ENCODE measurements at regions of chr6 and their contacts with region 1.

Region 1: GRCh38 chr6:46129629-46130511 is at the start of gene ENPP4:
- DNase-seq: peak; percentile 83 to 90
- H3K4me3 ChIP-seq: peak within 1 kb of the TSS; percentile 61
- H3K4me3 Mint-ChIP-seq: peak within 1 kb of the TSS; percentile 89
- H3K27ac Mint-ChIP-seq: peak within 1 kb of the TSS; percentile 41
- H3K4me1 ChIP-seq: no peaks in the 10 kb centered on the region
- H3K4me1 Mint-ChIP-seq: no peaks in the 10 kb centered on the region
- H3K27me3 ChIP-seq: no peaks in the 10 kb centered on the region; the same call in 1 of the 2 replicates
- H3K27me3 Mint-ChIP-seq: peaks cover 4% of the 10 kb centered on the region
- CTCF ChIP-seq: no peak
- total RNA-seq, gene ENPP4: 2.7 TPM in 2 replicates

Region 2: GRCh38 chr6:46170357-46171289 is 40.8 kb after region 1 on chr6 and contains the start of gene ENPP5:
- CTCF ChIA-PET with region 1: no interaction called
- POLR2A ChIA-PET with region 1: no interaction called
- intact Hi-C with region 1: loop called (anchors 1 kb)
- DNase-seq: peak; percentile 91 to 94
- H3K4me3 ChIP-seq: peak within 1 kb of the TSS; percentile 53
- H3K4me3 Mint-ChIP-seq: peak within 1 kb of the TSS; percentile 91
- H3K27ac Mint-ChIP-seq: no peak within 1 kb of the TSS
- H3K4me1 ChIP-seq: 0 out of 2 replicates have a peak, but pooled peaks cover 4% of the 10 kb centered on the region
- H3K4me1 Mint-ChIP-seq: peaks cover 6% of the 10 kb centered on the region
- H3K27me3 ChIP-seq: no peaks in the 10 kb centered on the region
- H3K27me3 Mint-ChIP-seq: peaks cover 2% of the 10 kb centered on the region
- CTCF ChIP-seq: no peak
- total RNA-seq, gene ENPP5: 1.4 and 2.3 TPM in 2 replicates

Measured in Caco-2 (cell line).